ENCODE measurements at regions of chr16 and their contacts with region 1.

Region 1: GRCh38 chr16:12327971-12328726 is 351.6 kb downstream of the SNX29 start:
- H3K4me3 ChIP-seq: no peak overlapping the region
- H3K27ac ChIP-seq: no peak overlapping the region
- H3K4me1 ChIP-seq: no peaks in the 10 kb centered on the region
- CTCF ChIP-seq: no peak

Region 2: DNA sequence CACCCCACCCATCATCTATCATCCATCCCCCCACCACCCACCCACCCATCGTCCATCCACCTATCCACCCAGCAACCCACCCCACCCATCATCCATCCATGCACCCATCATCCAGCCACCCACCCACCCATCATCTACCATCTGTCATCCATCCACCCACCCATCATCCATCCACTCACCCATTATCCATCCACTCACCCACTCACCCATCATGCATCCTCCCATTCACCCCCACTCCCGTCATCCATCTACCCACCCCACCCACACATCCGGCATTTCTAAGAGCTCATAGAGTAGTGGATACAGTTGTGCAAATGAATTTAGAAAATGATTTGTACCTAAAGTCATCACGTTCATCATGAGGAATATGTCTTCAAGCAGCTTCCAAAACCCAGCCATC is 53.5 kb after region 1 on chr16:
- CTCF ChIA-PET with region 1: no interaction called
- POLR2A ChIA-PET with region 1: interaction called, 10 read pairs
- H3K4me3 ChIP-seq: no peak overlapping the region
- H3K27ac ChIP-seq: no peak overlapping the region
- H3K4me1 ChIP-seq: no peaks in the 10 kb centered on the region
- CTCF ChIP-seq: no peak